Natural killer cell (primary cell): ENCODE measurements at regions of chr5 and their contacts with region 1.

Region 1: GRCh38 chr5:36241631-36242533 is at the start of gene NADK2:
- DNase-seq: peak; percentile 93 to 96
- ATAC-seq: peak; percentile 86 to 93 (median 86)
- H3K4me3 ChIP-seq: peak within 1 kb of the TSS; percentile 91
- H3K4me3 Mint-ChIP-seq: peak within 1 kb of the TSS; percentile 93
- H3K27ac ChIP-seq: peak within 1 kb of the TSS; percentile 95
- H3K27ac Mint-ChIP-seq: peak within 1 kb of the TSS; percentile 54 to 92
- H3K4me1 ChIP-seq: peaks cover 15% of the 10 kb centered on the region
- H3K4me1 Mint-ChIP-seq: peaks cover 25 to 42% of the 10 kb centered on the region in 2 donors
- H3K27me3 ChIP-seq: no peaks in the 10 kb centered on the region
- H3K27me3 Mint-ChIP-seq: no peaks in the 10 kb centered on the region
- CTCF ChIP-seq: peak; percentile 66
- total RNA-seq, gene NADK2: 13.1 to 16.2 (median 14.3) TPM

Region 2: DNA sequence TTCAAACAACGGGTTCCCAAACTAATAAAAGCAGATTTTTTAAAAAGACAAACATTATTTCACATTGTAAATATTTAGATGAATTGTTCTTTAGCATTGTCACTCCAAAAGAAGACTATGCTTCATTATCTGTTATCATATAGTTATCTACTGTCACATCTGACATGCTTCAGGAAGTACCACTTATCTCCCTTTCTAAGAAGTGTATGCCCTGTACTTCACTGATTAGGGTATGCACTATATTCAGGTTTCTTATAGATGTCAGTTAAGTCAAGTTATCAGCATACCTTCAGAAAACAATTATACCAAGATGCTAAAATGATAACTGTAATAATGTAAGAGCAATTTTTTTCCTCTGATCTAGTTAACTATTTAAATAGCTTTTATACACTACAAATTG is 130.6 kb before region 1 on chr5:
- intact Hi-C with region 1: no loop called
- DNase-seq: no peak
- ATAC-seq: peak in 1 of 3 donors; percentile 80
- H3K4me3 ChIP-seq: no peak overlapping the region
- H3K4me3 Mint-ChIP-seq: no peak overlapping the region
- H3K27ac ChIP-seq: no peak overlapping the region
- H3K27ac Mint-ChIP-seq: no peak overlapping the region
- H3K4me1 ChIP-seq: no peaks in the 10 kb centered on the region
- H3K4me1 Mint-ChIP-seq: no peaks in the 10 kb centered on the region
- H3K27me3 ChIP-seq: no peaks in the 10 kb centered on the region
- H3K27me3 Mint-ChIP-seq: no peaks in the 10 kb centered on the region
- CTCF ChIP-seq: no peak

Region 3: GRCh38 chr5:36151434-36152323 is 90.2 kb before region 1 on chr5 and contains the starts of genes LMBRD2 and SKP2:
- intact Hi-C with region 1: loop called (anchors 1 kb)
- DNase-seq: peak; percentile 96 to 98
- ATAC-seq: peak; percentile 97 to 100 (median 98)
- H3K4me3 ChIP-seq: peak within 1 kb of the TSS; percentile 87
- H3K4me3 Mint-ChIP-seq: peak within 1 kb of the TSS; percentile 98
- H3K27ac ChIP-seq: peak within 1 kb of the TSS; percentile 70
- H3K27ac Mint-ChIP-seq: peak within 1 kb of the TSS; percentile 90 to 92
- H3K4me1 ChIP-seq: peaks cover 14% of the 10 kb centered on the region
- H3K4me1 Mint-ChIP-seq: peaks cover 52 to 63% of the 10 kb centered on the region in 2 donors
- H3K27me3 ChIP-seq: no peaks in the 10 kb centered on the region
- H3K27me3 Mint-ChIP-seq: no peaks in the 10 kb centered on the region
- CTCF ChIP-seq: no peak
- total RNA-seq, gene LMBRD2: 6.9 to 9.8 (median 9.6) TPM
- total RNA-seq, gene SKP2: 12.0 to 20.5 (median 15.0) TPM

Region 4: DNA sequence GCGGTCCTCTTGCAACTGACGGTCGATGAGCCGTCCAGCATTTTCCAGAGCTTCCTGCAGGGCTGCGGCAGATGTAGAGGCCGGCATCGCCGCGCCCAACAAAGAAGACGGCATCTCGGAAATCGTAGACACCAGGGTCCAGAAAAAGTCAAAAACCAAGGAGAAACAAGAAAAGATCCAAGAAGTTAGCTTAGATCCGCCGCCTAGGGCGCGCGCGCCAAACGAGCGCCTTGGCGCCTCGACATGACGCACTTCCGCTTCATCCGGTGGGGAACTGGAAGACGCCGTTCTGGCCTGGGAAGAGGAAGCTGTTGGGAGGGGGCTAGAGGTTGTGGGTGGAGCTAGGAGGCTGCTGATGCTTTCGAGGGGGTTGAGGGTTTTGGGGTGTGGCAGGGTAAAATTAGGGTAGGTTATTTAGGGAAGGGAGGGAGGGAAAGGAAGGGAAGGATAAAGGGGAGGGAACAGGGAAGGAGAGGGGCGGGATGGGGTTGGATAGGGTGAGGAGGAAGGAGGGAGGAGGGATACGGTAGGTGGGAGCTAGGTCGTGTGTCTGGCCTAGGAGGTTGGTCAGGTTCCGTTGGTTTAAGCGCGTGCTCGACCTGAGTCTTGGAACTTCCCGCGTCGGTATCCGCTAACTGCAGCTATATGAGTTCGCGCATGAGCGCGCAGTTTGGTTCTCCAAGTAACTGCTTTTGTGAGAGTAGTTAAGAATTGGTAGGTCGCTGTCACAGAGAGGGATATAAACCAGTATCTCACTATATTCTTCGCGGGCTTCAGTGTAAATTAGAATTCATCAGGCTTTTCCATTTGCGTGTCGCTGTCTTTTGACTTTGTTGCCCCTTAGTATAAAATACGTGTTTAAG is 1129.2 kb after region 1 on chr5 and contains the start of gene NUP155:
- intact Hi-C with region 1: loop called (anchors 10 kb)
- DNase-seq: peak; percentile 80 to 96
- ATAC-seq: peak; percentile 89 to 96 (median 91)
- H3K4me3 ChIP-seq: peak within 1 kb of the TSS; percentile 77
- H3K4me3 Mint-ChIP-seq: peak within 1 kb of the TSS; percentile 97
- H3K27ac ChIP-seq: peak within 1 kb of the TSS; percentile 87
- H3K27ac Mint-ChIP-seq: peak within 1 kb of the TSS; percentile 95 to 97
- H3K4me1 ChIP-seq: peaks cover 19% of the 10 kb centered on the region
- H3K4me1 Mint-ChIP-seq: peaks cover 35 to 37% of the 10 kb centered on the region in 2 donors
- H3K27me3 ChIP-seq: no peaks in the 10 kb centered on the region
- H3K27me3 Mint-ChIP-seq: no peaks in the 10 kb centered on the region
- CTCF ChIP-seq: no peak
- total RNA-seq, gene NUP155: 21.1 to 29.0 (median 27.9) TPM